ENCODE measurements at regions of chr16 and their contacts with region 1.

Region 1: GRCh38 chr16:87492721-87493607 is at the start of gene ZCCHC14:
- DNase-seq: peak; percentile 100
- ATAC-seq: peak; percentile 99
- H3K4me3 ChIP-seq: peak within 1 kb of the TSS; percentile 38 to 85
- H3K27ac ChIP-seq: peak within 1 kb of the TSS; percentile 26 to 94
- H3K4me1 ChIP-seq: no peaks in the 10 kb centered on the region
- H3K27me3 ChIP-seq: no peaks in the 10 kb centered on the region
- total RNA-seq, gene ZCCHC14: 32.5 to 42.5 TPM

Region 2: DNA sequence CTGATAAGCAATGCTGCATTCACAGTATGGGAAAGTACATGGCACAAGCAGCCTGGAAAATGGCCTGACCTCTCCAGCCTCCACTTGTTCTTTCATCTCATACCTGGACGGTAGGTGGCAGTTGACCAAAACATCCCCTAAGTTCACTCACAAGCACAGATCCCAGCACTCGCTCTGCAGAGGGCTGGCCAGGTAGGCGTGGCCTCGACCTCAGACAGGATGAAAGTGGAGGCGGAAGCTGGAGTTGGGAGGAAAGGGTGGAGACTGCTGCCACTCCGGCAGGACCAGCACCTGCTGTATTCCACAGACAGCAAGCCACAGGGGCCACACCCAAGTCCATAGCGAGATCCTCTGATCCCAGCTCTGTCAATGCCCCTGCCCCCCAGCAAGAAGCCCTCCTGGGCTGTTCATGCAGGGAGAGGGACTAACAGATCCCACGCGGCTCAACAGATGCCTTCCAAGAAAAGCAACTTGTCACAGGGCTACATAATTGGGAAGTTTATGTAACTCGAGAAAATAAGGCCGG is 31.4 kb before region 1 on chr16:
- intact Hi-C with region 1: loop called in 1 of 2 experiments (anchors 1 kb)
- DNase-seq: peak; percentile 76 to 86
- ATAC-seq: peak; percentile 27
- H3K4me3 ChIP-seq: no peak overlapping the region
- H3K27ac ChIP-seq: peak overlapping the region in 1 of 2 donors; percentile 4
- H3K4me1 ChIP-seq: peaks cover 0 to 3% of the 10 kb centered on the region in 2 donors
- H3K27me3 ChIP-seq: no peaks in the 10 kb centered on the region

Region 3: DNA sequence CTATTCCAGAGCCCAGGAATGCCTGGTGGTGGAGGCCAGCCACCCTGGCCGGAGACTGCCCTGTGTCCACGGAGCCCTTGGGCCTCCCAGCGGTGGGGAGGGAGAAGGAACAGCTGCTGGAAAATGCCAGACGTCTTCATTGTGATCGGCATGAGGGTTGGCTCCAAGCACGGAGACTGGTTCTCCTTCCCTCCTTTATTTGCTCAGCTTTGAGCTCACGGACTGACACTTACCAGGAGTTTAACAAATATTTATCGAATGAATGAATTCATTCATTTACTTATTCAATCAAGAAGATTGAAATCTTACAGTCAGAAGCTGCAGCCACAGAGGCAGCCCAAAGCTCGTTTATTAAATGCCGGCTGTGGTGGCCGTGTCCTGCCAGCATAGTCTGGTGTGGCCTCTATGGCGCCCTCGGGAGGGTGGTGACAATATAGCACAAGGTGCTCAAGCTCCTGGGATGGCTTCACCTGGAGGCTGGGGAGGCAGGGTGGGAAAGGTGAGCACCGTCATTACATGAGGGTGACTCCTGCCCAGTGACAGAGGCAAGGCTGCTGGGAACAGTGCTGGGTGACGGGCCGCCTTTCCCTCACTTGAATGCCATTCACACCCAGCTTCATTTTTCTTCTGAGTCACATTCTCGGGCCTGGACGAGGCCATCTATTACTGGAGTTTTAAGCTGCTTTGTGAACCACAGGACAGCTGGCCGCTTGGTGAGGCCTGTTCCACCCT is 78.3 kb after region 1 on chr16:
- intact Hi-C with region 1: loop called in 1 of 2 experiments (anchors 2 kb)
- DNase-seq: peak; percentile 80 to 85
- ATAC-seq: peak; percentile 85
- H3K4me3 ChIP-seq: no peak overlapping the region
- H3K27ac ChIP-seq: peak overlapping the region; percentile 16 to 86
- H3K4me1 ChIP-seq: no peaks in the 10 kb centered on the region
- H3K27me3 ChIP-seq: no peaks in the 10 kb centered on the region

Measured in aorta (tissue), 5 donors.